ENCODE measurements at regions of chr6 and their contacts with region 1.

Region 1: DNA sequence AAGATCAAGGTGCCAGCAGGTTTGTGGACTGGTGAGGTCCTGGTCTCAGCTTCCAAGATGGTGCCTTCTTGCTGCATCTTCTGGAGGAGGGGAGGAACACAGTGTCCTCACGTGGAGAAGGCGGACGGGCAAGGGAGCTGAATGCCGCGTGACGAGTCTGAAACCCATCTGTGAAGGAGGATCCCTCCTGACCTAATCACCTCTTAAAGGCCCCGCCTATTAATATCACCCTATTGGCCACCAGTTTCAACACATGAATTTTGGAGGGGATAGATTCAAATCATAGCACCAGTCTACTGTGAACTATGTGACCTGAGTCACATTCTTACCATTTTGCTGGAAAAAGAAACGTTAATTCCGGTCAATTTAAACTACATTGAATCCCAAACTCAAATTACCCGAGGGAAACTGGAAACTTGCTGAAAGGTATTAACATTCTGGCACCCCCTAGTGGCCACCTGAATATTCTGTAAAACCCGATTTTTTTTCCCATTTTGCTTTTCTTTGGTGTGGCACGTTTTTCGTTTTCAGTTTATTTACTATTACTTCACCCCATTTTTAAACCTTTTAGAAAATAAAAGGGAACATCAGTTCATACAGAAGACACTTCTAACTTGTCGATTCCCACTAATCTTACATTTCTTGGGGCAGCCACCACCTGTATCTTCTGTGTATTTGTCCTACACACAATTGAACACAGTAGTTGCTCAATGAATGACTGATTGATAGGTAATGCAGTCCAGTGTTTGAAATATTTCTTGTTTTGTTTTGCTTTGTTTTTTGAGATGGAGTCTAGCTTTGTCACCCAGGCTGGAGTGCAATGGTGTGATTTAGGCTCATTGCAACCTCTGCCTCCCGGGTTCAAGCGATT is 17.9 kb upstream of the CCDC170 start:
- DNase-seq: no peak
- ATAC-seq: peak in 1 of 2 donors; percentile 44
- H3K4me3 ChIP-seq: peak overlapping the region in 1 of 4 donors; percentile 16
- H3K27ac ChIP-seq: no peak overlapping the region
- H3K4me1 ChIP-seq: no peaks in the 10 kb centered on the region
- H3K27me3 ChIP-seq: no peaks in the 10 kb centered on the region
- CTCF ChIP-seq: peak; percentile 27 to 81 (median 72)
- POLR2A ChIP-seq: no peak

Region 2: DNA sequence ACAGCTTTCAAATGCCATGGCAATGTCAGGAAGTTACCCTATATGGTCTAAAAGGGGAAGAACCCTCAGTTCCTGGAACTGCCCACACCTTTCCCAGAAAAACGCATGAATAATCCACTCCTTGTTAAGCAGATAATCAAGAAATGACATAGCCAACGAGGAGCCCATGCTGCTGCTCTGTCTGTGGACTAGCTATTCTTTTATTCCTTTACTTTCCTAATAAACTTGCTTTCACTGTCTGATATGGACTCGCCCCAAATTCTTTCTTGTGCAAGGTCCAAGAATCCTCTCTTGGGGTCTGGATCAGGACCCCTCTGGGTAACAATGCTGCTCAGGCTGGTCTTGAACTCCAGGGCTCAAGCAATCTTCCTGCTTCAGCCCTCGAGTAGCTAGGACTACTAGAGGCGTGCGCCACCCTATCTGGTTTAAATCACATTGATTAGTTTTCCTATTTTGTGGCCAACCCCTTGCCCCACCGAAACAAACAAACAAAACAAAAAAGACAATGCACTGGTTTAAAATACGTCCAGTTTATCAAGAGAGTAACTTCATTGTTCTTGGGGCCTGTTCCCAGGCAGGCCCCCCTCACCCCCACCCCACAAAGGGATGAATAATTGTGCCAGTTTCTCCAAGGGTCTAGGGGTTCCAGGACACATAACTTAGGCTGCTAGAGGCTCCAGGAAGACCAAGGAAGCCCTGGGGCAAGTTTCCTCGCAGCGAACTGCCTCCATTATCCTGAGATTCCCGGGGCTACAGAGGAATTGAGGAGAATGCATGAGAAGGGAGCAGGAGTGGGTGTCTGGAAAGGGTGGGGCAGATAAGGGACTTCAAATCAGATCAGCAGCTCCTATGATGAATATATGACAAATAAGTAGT is 246.2 kb before region 1 on chr6:
- in situ Hi-C with region 1: no loop called
- intact Hi-C with region 1: no loop called
- DNase-seq: no peak
- ATAC-seq: no peak
- H3K4me3 ChIP-seq: no peak overlapping the region
- H3K27ac ChIP-seq: no peak overlapping the region
- H3K4me1 ChIP-seq: no peaks in the 10 kb centered on the region
- H3K27me3 ChIP-seq: no peaks in the 10 kb centered on the region
- CTCF ChIP-seq: no peak
- POLR2A ChIP-seq: no peak

Region 3: DNA sequence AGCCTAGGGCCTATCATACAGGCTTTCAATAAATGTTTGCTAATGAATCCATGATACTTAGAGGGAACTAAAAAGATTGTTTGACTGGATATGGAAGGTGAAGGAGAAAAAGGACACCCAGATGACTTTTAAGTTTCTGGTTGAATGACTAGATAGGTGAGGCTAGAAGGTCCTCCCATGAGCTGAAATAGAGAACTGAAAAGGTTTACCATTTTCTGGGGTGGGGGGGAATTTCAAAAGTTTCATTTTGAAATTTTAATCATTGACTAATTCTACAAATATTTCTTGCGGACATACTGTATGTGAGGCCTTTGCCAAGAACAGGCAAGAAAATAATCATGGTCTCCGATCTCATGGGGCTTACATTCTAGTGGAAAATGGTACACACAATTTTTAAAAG is 66.6 kb before region 1 on chr6:
- in situ Hi-C with region 1: loop called in 1 of 4 experiments (anchors 10 kb)
- intact Hi-C with region 1: loop called (anchors 1 kb)
- DNase-seq: no peak
- ATAC-seq: no peak
- H3K4me3 ChIP-seq: no peak overlapping the region
- H3K27ac ChIP-seq: peak overlapping the region in 1 of 4 donors; percentile 39
- H3K4me1 ChIP-seq: peaks cover 0 to 4% of the 10 kb centered on the region in 2 donors
- H3K27me3 ChIP-seq: no peaks in the 10 kb centered on the region
- CTCF ChIP-seq: no peak
- POLR2A ChIP-seq: no peak

Measured in gastrocnemius medialis (tissue), 4 donors.